ENCODE measurements at regions of chr11 and their contacts with region 1.

Region 1: GRCh38 chr11:83612891-83613766 is 327.0 kb upstream of the CCDC90B start:
- DNase-seq: no peak
- ATAC-seq: no peak
- H3K4me3 ChIP-seq: no peak overlapping the region
- H3K4me3 Mint-ChIP-seq: no peak overlapping the region
- H3K27ac ChIP-seq: no peak overlapping the region
- H3K27ac Mint-ChIP-seq: no peak overlapping the region
- H3K4me1 ChIP-seq: no peaks in the 10 kb centered on the region
- H3K4me1 Mint-ChIP-seq: no peaks in the 10 kb centered on the region
- H3K27me3 ChIP-seq: no peaks in the 10 kb centered on the region
- H3K27me3 Mint-ChIP-seq: no peaks in the 10 kb centered on the region
- CTCF ChIP-seq: no peak

Region 2: DNA sequence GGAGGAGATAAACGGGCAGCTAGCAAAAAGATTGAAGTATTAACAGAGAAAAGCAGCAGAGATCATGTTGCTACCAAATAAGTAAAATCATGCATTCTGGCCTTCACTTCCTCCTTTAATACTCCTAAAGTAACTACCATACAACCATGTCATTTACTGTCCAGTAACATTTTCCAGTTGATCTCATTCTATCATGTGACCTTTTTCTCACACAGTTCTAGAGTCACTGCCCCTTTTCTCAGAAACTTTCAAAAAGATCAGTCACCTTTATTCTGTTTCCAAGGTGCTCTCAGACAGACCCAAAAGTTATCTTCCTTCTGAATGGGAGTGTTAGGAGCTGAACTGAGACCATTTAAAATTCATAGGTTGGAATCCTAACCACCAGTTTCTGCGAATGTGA is 1863.9 kb before region 1 on chr11:
- CTCF ChIA-PET with region 1: no interaction called
- POLR2A ChIA-PET with region 1: no interaction called
- intact Hi-C with region 1: loop called in 1 of 2 experiments (anchors 5 kb)
- DNase-seq: no peak
- ATAC-seq: no peak
- H3K4me3 ChIP-seq: no peak overlapping the region
- H3K4me3 Mint-ChIP-seq: no peak overlapping the region
- H3K27ac ChIP-seq: no peak overlapping the region
- H3K27ac Mint-ChIP-seq: no peak overlapping the region
- H3K4me1 ChIP-seq: no peaks in the 10 kb centered on the region
- H3K4me1 Mint-ChIP-seq: peaks cover 2% of the 10 kb centered on the region
- H3K27me3 ChIP-seq: no peaks in the 10 kb centered on the region
- H3K27me3 Mint-ChIP-seq: peaks cover 12% of the 10 kb centered on the region
- CTCF ChIP-seq: no peak

Region 3: DNA sequence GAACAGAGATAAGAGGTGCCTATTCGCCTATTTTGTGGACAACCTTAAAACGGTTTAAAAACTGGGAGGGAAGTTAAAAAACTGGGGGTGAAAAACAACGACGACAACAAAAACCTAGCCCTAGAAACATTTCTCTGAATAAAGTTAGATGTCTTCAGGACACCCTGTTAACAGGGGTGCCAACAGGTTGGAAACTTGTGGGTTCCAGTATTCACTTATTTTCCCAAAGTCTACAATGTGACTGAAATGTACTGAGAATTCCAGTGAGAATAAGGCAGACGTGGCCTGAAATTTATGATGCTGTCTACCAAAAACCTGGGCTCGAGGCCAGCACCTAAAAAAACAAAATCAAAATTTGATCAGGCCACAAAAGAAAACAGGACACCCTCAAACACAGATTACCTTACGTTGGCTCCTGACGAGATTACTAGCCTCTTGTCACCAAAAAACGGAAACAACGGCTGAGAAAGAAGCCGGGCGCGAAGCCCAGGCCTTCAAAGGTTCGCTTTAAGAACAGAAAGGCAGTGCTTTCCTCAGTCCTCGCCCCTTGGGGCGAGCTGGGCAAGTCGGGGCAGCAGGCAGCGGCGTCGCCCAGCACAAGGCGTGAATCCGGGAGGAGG is 327.9 kb before region 1 on chr11:
- CTCF ChIA-PET with region 1: no interaction called
- POLR2A ChIA-PET with region 1: no interaction called
- intact Hi-C with region 1: no loop called
- DNase-seq: peak in 1 of 9 experiments; percentile 3
- ATAC-seq: peak; percentile 19
- H3K4me3 ChIP-seq: peak overlapping the region; percentile 78 to 86
- H3K4me3 Mint-ChIP-seq: peak overlapping the region; percentile 98
- H3K27ac ChIP-seq: peak overlapping the region; percentile 88 to 99
- H3K27ac Mint-ChIP-seq: peak overlapping the region; percentile 100
- H3K4me1 ChIP-seq: peaks cover 23% of the 10 kb centered on the region
- H3K4me1 Mint-ChIP-seq: peaks cover 51% of the 10 kb centered on the region
- H3K27me3 ChIP-seq: no peaks in the 10 kb centered on the region
- H3K27me3 Mint-ChIP-seq: no peaks in the 10 kb centered on the region
- CTCF ChIP-seq: no peak

Region 4: DNA sequence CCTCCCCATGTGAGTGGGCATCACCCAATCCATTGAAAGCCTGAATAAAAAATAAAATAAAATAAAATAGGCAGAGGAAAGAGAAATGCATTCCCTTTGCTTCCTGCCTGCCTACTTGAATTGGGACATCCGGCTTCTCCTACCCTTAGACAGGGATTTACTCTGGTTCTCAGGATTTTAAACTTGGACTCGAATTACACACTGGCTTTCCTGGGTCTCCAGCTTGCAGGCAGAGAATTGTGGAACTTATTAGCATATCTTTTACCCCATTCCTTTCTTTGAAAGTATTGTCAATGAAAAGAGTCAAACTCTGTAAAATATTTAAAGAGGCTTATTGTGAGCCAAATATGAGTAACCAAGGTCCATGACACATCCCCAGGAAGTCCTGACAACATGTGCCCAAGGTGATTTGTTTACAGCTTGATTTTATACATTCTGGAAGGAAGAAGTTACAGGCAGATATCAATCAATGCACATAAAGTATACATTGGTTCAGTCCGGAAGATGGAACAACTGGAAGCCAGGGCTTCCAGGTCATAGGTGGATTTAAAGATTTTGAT is 248.5 kb before region 1 on chr11:
- CTCF ChIA-PET with region 1: no interaction called
- POLR2A ChIA-PET with region 1: no interaction called
- intact Hi-C with region 1: no loop called
- DNase-seq: no peak
- ATAC-seq: no peak
- H3K4me3 ChIP-seq: no peak overlapping the region
- H3K4me3 Mint-ChIP-seq: no peak overlapping the region
- H3K27ac ChIP-seq: no peak overlapping the region
- H3K27ac Mint-ChIP-seq: no peak overlapping the region
- H3K4me1 ChIP-seq: no peaks in the 10 kb centered on the region
- H3K4me1 Mint-ChIP-seq: no peaks in the 10 kb centered on the region
- H3K27me3 ChIP-seq: no peaks in the 10 kb centered on the region
- H3K27me3 Mint-ChIP-seq: peaks cover 3% of the 10 kb centered on the region
- CTCF ChIP-seq: no peak

Measured in CD8-positive, alpha-beta T cell (primary cell).